ENCODE measurements at regions of chr7 and their contacts with region 1.

Region 1: DNA sequence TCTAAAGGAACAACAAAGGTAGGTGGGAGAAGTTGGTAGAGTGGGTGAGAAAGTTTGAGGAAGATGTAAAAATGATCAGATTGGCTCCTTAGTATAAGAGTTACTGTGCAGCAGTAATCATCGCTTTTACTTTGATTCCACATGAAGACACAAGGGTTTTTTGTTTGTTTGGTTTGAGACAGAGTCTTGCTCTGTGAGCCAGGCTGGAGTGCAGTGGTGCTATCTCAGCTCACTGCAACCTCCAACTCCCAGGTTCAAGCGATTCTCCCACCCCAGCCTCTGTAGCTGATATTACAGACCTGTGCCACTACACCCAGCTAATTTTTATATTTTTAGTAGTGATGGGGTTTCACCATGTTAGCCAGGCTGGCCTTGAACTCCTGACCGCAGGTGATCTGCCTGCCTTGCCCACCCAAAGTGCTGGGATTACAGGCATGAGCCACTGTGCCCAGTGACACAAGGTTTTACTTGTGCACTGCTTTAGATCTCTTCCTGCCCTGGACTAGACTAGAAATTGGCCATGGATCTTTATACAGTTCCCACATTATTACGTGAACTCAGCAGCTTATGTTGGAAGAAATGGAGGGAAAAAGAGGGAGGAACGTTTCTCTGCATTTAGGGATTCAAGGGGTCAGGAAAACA is 10.7 kb downstream of the LUC7L2 start:
- DNase-seq: no peak
- ATAC-seq: no peak
- H3K4me3 ChIP-seq: no peak overlapping the region
- H3K4me3 Mint-ChIP-seq: peak overlapping the region; percentile 29
- H3K27ac ChIP-seq: no peak overlapping the region
- H3K27ac Mint-ChIP-seq: peak overlapping the region; percentile 56
- H3K4me1 ChIP-seq: peaks cover 50% of the 10 kb centered on the region
- H3K4me1 Mint-ChIP-seq: peaks cover 80% of the 10 kb centered on the region
- H3K27me3 ChIP-seq: no peaks in the 10 kb centered on the region
- H3K27me3 Mint-ChIP-seq: no peaks in the 10 kb centered on the region
- CTCF ChIP-seq: no peak

Region 2: DNA sequence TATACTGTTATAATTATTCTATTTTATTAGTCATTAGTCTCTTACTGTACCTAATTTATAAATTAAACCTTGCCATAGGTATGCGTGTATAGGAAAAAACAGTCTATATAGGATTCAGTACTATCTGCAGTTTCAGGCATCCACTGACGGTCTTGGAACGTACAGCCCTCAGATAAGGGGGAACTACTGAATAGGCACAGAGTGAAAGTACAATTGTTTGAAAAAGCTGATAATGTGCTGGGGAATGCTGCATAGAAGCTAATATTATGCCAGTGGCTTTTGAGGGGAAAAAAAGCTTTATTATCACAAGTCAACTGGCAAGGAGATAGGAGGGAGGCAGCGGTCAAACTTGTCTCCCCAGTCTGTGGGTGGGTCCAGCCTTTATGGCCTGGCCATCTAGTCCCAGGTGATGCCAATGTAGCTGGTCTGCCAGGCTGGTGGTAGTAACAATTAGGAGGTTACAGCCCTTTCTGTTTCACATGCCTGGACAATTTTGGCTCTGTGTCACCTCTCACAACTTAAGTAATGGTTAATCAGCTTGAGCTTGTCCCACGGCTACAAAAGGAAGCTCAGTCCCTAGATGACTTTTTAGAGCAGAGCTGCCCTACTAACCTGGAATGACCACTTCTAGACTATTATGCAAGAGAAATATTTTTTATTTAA is 37.6 kb before region 1 on chr7:
- CTCF ChIA-PET with region 1: no interaction called
- POLR2A ChIA-PET with region 1: no interaction called
- intact Hi-C with region 1: loop called in 1 of 2 experiments (anchors 5 kb)
- DNase-seq: no peak
- ATAC-seq: no peak
- H3K4me3 ChIP-seq: no peak overlapping the region
- H3K4me3 Mint-ChIP-seq: no peak overlapping the region
- H3K27ac ChIP-seq: no peak overlapping the region
- H3K27ac Mint-ChIP-seq: no peak overlapping the region
- H3K4me1 ChIP-seq: no peaks in the 10 kb centered on the region
- H3K4me1 Mint-ChIP-seq: peaks cover 12% of the 10 kb centered on the region
- H3K27me3 ChIP-seq: no peaks in the 10 kb centered on the region
- H3K27me3 Mint-ChIP-seq: no peaks in the 10 kb centered on the region
- CTCF ChIP-seq: no peak